Natural killer cell (primary cell): ENCODE measurements at regions of chr2 and their contacts with region 1.

Region 1: GRCh38 chr2:206765242-206766056 is at the starts of genes FASTKD2 and MDH1B:
- DNase-seq: peak; percentile 81 to 93
- ATAC-seq: peak; percentile 86 to 94 (median 87)
- H3K4me3 ChIP-seq: peak within 1 kb of the TSS; percentile 54
- H3K4me3 Mint-ChIP-seq: peak within 1 kb of the TSS; percentile 91
- H3K27ac ChIP-seq: peak within 1 kb of the TSS; percentile 86
- H3K27ac Mint-ChIP-seq: peak within 1 kb of the TSS in 1 of 2 donors; percentile 92
- H3K4me1 ChIP-seq: peaks cover 11% of the 10 kb centered on the region
- H3K4me1 Mint-ChIP-seq: peaks cover 19 to 22% of the 10 kb centered on the region in 2 donors
- H3K27me3 ChIP-seq: peaks cover 2% of the 10 kb centered on the region
- H3K27me3 Mint-ChIP-seq: peaks cover 0 to 2% of the 10 kb centered on the region in 2 donors
- CTCF ChIP-seq: no peak
- total RNA-seq, gene FASTKD2: 15.9 to 21.6 (median 17.0) TPM
- total RNA-seq, gene MDH1B: not detected

Region 2: DNA sequence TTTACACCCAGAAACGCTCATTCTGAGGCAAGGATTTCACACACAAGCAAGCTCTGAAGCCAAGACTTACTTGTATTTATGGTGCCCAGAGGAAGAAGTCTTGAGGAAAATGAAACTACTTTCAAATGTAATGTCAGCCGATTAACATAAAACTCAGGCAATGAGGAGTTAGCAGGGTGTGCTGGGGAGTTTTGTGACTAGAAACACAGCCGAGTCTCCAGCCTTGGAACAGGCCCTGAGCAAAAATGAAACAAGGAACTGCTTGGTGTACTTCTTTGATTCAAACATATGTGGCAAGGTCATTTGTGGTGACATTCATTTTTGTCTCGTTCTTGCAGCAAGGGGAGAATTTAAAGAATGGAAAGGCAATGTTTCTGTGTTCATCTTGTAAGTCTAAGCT is 51.7 kb before region 1 on chr2:
- intact Hi-C with region 1: no loop called
- DNase-seq: no peak
- ATAC-seq: no peak
- H3K4me3 ChIP-seq: no peak overlapping the region
- H3K4me3 Mint-ChIP-seq: no peak overlapping the region
- H3K27ac ChIP-seq: no peak overlapping the region
- H3K27ac Mint-ChIP-seq: no peak overlapping the region
- H3K4me1 ChIP-seq: no peaks in the 10 kb centered on the region
- H3K4me1 Mint-ChIP-seq: no peaks in the 10 kb centered on the region
- H3K27me3 ChIP-seq: no peaks in the 10 kb centered on the region
- H3K27me3 Mint-ChIP-seq: peaks cover 5 to 8% of the 10 kb centered on the region in 2 donors
- CTCF ChIP-seq: no peak

Region 3: DNA sequence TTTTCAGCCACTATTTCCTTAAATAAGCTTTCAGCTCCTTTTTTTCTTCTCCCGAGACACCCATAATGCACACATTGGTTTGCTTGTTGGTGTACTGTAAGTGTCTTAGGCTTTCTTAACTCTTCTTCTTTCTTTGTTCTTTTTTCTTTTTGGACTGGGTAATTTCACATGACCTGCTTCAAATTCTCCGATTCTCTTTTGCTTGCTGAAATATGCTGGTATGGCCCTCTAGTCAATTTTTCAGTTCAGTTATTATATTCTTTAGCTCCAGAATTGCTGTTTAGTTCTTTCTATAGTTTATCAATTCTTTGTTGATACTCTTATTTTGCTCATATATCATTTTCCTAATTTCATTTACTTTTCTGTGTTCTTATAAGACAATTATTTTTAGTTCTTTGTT is 15.2 kb after region 1 on chr2:
- intact Hi-C with region 1: loop called (anchors 2 kb)
- DNase-seq: no peak
- ATAC-seq: no peak
- H3K4me3 ChIP-seq: no peak overlapping the region
- H3K4me3 Mint-ChIP-seq: no peak overlapping the region
- H3K27ac ChIP-seq: no peak overlapping the region
- H3K27ac Mint-ChIP-seq: no peak overlapping the region
- H3K4me1 ChIP-seq: no peaks in the 10 kb centered on the region
- H3K4me1 Mint-ChIP-seq: peaks cover 29 to 38% of the 10 kb centered on the region in 2 donors
- H3K27me3 ChIP-seq: no peaks in the 10 kb centered on the region
- H3K27me3 Mint-ChIP-seq: no peaks in the 10 kb centered on the region
- CTCF ChIP-seq: no peak

Region 4: DNA sequence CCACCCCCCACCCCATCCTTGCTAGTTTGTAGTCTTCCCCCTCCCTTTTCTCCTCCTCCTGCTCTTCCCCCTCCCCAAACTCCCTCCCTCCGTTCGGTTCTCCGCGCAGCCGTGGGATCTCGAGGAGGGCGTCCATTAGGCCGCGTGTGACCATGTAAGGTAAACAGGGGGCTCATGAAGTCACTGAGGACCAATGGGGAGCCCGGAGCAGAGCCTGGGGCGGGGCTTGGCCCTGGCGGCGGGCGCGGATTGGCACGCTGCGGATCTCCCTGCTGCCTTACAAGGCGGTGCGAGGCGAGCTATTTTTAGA is 400.5 kb after region 1 on chr2:
- intact Hi-C with region 1: loop called (anchors 5 kb)
- DNase-seq: peak; percentile 92 to 96
- ATAC-seq: peak; percentile 88 to 97 (median 94)
- H3K4me3 ChIP-seq: peak overlapping the region; percentile 74
- H3K4me3 Mint-ChIP-seq: peak overlapping the region; percentile 99
- H3K27ac ChIP-seq: peak overlapping the region; percentile 95
- H3K27ac Mint-ChIP-seq: peak overlapping the region; percentile 92 to 99
- H3K4me1 ChIP-seq: peaks cover 18% of the 10 kb centered on the region
- H3K4me1 Mint-ChIP-seq: peaks cover 45 to 56% of the 10 kb centered on the region in 2 donors
- H3K27me3 ChIP-seq: no peaks in the 10 kb centered on the region
- H3K27me3 Mint-ChIP-seq: peaks cover 0 to 25% of the 10 kb centered on the region in 2 donors
- CTCF ChIP-seq: no peak